Natural killer cell (primary cell): ENCODE measurements at regions of chr1 and their contacts with region 1.

Region 1: GRCh38 chr1:156129706-156130581 is 15.4 kb downstream of the LMNA start:
- DNase-seq: peak; percentile 74 to 87
- ATAC-seq: peak; percentile 44 to 58 (median 57)
- H3K4me3 ChIP-seq: no peak overlapping the region
- H3K4me3 Mint-ChIP-seq: no peak overlapping the region
- H3K27ac ChIP-seq: no peak overlapping the region
- H3K27ac Mint-ChIP-seq: peak overlapping the region; percentile 63 to 92
- H3K4me1 ChIP-seq: peaks cover 56% of the 10 kb centered on the region
- H3K4me1 Mint-ChIP-seq: peaks cover 15 to 39% of the 10 kb centered on the region in 2 donors
- H3K27me3 ChIP-seq: peaks cover 7% of the 10 kb centered on the region
- H3K27me3 Mint-ChIP-seq: no peaks in the 10 kb centered on the region
- CTCF ChIP-seq: peak; percentile 93

Region 2: GRCh38 chr1:156090822-156091188 is 39.1 kb before region 1 on chr1:
- intact Hi-C with region 1: loop called (anchors 1 kb)
- DNase-seq: peak; percentile 83 to 94
- ATAC-seq: peak; percentile 84 to 99 (median 95)
- H3K4me3 ChIP-seq: no peak overlapping the region
- H3K4me3 Mint-ChIP-seq: no peak overlapping the region
- H3K27ac ChIP-seq: no peak overlapping the region
- H3K27ac Mint-ChIP-seq: no peak overlapping the region
- H3K4me1 ChIP-seq: peaks cover 11% of the 10 kb centered on the region
- H3K4me1 Mint-ChIP-seq: peaks cover 0 to 10% of the 10 kb centered on the region in 2 donors
- H3K27me3 ChIP-seq: no peaks in the 10 kb centered on the region
- H3K27me3 Mint-ChIP-seq: peaks cover 11 to 12% of the 10 kb centered on the region in 2 donors
- CTCF ChIP-seq: peak; percentile 89

Region 3: DNA sequence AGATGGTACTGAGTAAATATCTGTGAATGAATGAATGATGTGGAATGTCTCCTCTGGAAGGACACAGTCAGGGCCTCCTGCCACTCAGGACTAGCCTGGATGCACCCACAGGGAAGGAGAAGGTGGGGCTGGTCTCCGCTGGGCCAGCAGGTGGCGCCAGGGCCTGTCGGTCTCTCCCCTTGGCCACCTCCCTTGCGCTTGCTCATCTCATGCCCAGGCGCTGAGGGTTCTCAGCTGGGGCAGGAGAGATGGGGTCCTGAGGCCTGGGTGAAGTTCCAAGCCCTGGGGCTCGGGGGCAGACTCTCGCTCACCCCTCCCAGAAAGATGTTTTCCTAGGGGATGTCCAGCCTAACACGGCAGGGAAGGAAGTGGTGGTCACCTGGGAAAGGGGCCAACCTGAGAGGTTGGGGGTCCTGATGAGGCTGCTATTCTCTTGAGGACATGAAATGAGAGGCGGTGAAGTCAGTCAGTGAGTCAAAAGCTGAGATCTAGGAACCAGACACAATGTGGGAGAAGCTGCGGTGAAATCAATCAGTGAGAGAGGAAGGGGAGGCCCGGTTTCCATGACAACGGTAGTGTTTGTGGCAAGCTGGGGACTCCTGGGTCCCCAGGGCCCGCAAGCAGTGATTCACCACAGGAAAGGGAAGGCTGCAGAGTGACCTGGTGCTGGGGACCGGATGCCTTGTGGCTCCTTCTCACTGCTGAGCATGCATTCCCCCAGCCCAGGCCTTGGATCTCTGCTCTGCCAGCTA is 33.1 kb before region 1 on chr1:
- intact Hi-C with region 1: loop called (anchors 1 kb)
- DNase-seq: peak; percentile 82 to 97
- ATAC-seq: peak; percentile 80 to 88 (median 85)
- H3K4me3 ChIP-seq: no peak overlapping the region
- H3K4me3 Mint-ChIP-seq: peak overlapping the region; percentile 40
- H3K27ac ChIP-seq: peak overlapping the region; percentile 85
- H3K27ac Mint-ChIP-seq: peak overlapping the region; percentile 92 to 99
- H3K4me1 ChIP-seq: peaks cover 25% of the 10 kb centered on the region
- H3K4me1 Mint-ChIP-seq: peaks cover 15 to 36% of the 10 kb centered on the region in 2 donors
- H3K27me3 ChIP-seq: no peaks in the 10 kb centered on the region
- H3K27me3 Mint-ChIP-seq: peaks cover 7 to 9% of the 10 kb centered on the region in 2 donors
- CTCF ChIP-seq: peak; percentile 89

Region 4: GRCh38 chr1:156106624-156107488 is 23.1 kb before region 1 on chr1:
- intact Hi-C with region 1: loop called (anchors 2 kb)
- DNase-seq: no peak
- ATAC-seq: peak in 1 of 3 donors; percentile 18
- H3K4me3 ChIP-seq: no peak overlapping the region
- H3K4me3 Mint-ChIP-seq: peak overlapping the region; percentile 74
- H3K27ac ChIP-seq: peak overlapping the region; percentile 94
- H3K27ac Mint-ChIP-seq: peak overlapping the region; percentile 96 to 99
- H3K4me1 ChIP-seq: peaks cover 40% of the 10 kb centered on the region
- H3K4me1 Mint-ChIP-seq: peaks cover 11 to 43% of the 10 kb centered on the region in 2 donors
- H3K27me3 ChIP-seq: peaks cover 4% of the 10 kb centered on the region
- H3K27me3 Mint-ChIP-seq: peaks cover 0 to 7% of the 10 kb centered on the region in 2 donors
- CTCF ChIP-seq: no peak